WTC11 (cell line): ENCODE measurements at regions of chr1 and their contacts with region 1.

Region 1: DNA sequence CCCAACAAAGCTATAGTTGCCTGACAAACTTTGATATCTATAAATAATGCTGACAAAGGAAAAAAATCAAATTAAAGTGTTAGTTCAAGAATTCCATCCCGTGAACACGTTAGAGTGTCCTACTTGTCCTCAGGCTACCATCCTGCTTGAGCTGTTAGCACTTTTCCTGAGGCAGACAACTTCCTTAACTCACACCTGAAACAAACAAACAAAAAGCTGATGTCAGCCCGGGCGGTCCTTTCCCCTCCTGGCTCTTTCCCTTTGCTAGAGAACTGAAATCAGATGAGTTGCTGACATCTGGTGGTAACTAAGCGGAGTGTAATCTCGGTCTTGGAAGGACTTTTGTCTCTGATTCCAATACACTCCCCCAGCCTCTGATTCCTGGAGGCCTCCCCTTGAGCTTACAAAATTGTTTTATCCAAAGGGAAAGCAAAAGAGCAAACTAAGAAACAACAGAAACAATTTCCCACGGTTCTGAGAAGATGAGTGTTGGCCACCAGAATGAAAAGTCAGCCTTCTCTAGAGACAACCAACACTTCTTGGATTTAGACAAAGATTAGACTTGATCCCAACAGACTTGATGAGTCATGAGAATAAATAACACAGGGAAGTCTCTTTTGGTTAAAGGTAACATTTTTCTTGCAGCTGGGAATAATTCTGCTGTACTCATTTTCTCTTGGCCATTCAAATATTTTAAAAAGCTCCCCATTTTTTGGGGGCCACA is 135.4 kb downstream of the PROX1 start:
- DNase-seq: peak; percentile 71
- ATAC-seq: peak; percentile 97
- H3K4me3 Mint-ChIP-seq: no peak overlapping the region
- H3K27ac Mint-ChIP-seq: no peak overlapping the region
- H3K4me1 Mint-ChIP-seq: peaks cover 26% of the 10 kb centered on the region
- H3K27me3 Mint-ChIP-seq: 0 out of 2 replicates have a peak, but pooled peaks cover 4% of the 10 kb centered on the region
- CTCF ChIP-seq: peak; percentile 16; the same call in 1 of the 2 replicates

Region 2: GRCh38 chr1:213979751-213980586 is 143.3 kb before region 1 on chr1:
- CTCF ChIA-PET with region 1: interaction called, 16 read pairs
- POLR2A ChIA-PET with region 1: no interaction called
- DNase-seq: peak; percentile 63
- ATAC-seq: peak; percentile 67
- H3K4me3 Mint-ChIP-seq: peak overlapping the region; percentile 80
- H3K27ac Mint-ChIP-seq: no peak overlapping the region
- H3K4me1 Mint-ChIP-seq: peaks cover 65% of the 10 kb centered on the region
- H3K27me3 Mint-ChIP-seq: peaks cover 95% of the 10 kb centered on the region
- CTCF ChIP-seq: no peak

Region 3: DNA sequence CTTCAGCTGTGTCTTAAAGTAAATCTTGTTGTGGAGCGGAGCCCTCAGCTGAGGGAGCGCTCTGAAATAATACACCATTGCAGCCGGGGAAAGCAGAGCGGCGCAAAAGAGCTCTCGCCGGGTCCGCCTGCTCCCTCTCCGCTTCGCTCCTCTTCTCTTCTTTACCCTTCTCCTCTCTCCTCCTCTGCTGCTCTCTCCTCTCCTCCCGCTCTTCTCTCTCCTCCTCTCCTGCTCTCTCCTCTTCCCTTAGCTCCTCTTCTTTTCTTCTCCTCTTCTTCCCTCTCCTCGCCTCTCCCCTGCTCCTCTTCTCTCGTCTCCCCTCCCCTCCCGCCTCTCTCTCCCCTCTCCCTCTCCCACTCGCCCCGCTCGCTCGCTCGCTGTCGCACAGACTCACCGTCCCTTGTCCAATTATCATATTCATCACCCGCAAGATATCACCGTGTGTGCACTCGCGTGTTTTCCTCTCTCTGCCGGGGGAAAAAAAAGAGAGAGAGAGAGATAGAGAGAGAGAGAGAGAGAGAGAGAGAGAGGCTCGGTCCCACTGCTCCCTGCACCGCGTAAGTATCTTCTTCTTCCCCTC is 135.2 kb before region 1 on chr1 and contains the start of gene PROX1:
- CTCF ChIA-PET with region 1: interaction called, 22 read pairs
- POLR2A ChIA-PET with region 1: interaction called, 6 read pairs
- DNase-seq: no peak
- ATAC-seq: peak; percentile 53
- H3K4me3 Mint-ChIP-seq: peak within 1 kb of the TSS; percentile 91
- H3K27ac Mint-ChIP-seq: peak within 1 kb of the TSS; percentile 95
- H3K4me1 Mint-ChIP-seq: peaks cover 52% of the 10 kb centered on the region
- H3K27me3 Mint-ChIP-seq: peaks cover 88% of the 10 kb centered on the region
- CTCF ChIP-seq: no peak
- total RNA-seq, gene PROX1: 3.0 to 3.8 TPM (median 3.3 TPM) in 3 replicates

Region 4: GRCh38 chr1:214146523-214146922 is 23.3 kb after region 1 on chr1:
- CTCF ChIA-PET with region 1: no interaction called
- POLR2A ChIA-PET with region 1: no interaction called
- DNase-seq: no peak
- ATAC-seq: no peak
- H3K4me3 Mint-ChIP-seq: no peak overlapping the region
- H3K27ac Mint-ChIP-seq: no peak overlapping the region
- H3K4me1 Mint-ChIP-seq: peaks cover 23% of the 10 kb centered on the region
- H3K27me3 Mint-ChIP-seq: no peaks in the 10 kb centered on the region
- CTCF ChIP-seq: no peak

Region 5: GRCh38 chr1:214187121-214187900 is 64.1 kb after region 1 on chr1:
- CTCF ChIA-PET with region 1: no interaction called
- POLR2A ChIA-PET with region 1: no interaction called
- DNase-seq: peak; percentile 29
- ATAC-seq: peak; percentile 69
- H3K4me3 Mint-ChIP-seq: peak overlapping the region; percentile 64
- H3K27ac Mint-ChIP-seq: no peak overlapping the region
- H3K4me1 Mint-ChIP-seq: peaks cover 13% of the 10 kb centered on the region
- H3K27me3 Mint-ChIP-seq: peaks cover 49% of the 10 kb centered on the region
- CTCF ChIP-seq: no peak

Region 6: GRCh38 chr1:214224611-214225354 is 101.6 kb after region 1 on chr1:
- CTCF ChIA-PET with region 1: no interaction called
- POLR2A ChIA-PET with region 1: no interaction called
- DNase-seq: no peak
- ATAC-seq: peak; percentile 85
- H3K4me3 Mint-ChIP-seq: peak overlapping the region; percentile 63
- H3K27ac Mint-ChIP-seq: no peak overlapping the region
- H3K4me1 Mint-ChIP-seq: peaks cover 27% of the 10 kb centered on the region
- H3K27me3 Mint-ChIP-seq: peaks cover 27% of the 10 kb centered on the region
- CTCF ChIP-seq: no peak

Region 7: GRCh38 chr1:214292322-214292721 is 169.1 kb after region 1 on chr1:
- CTCF ChIA-PET with region 1: no interaction called
- POLR2A ChIA-PET with region 1: no interaction called
- DNase-seq: no peak
- ATAC-seq: no peak
- H3K4me3 Mint-ChIP-seq: no peak overlapping the region
- H3K27ac Mint-ChIP-seq: no peak overlapping the region
- H3K4me1 Mint-ChIP-seq: peaks cover 74% of the 10 kb centered on the region
- H3K27me3 Mint-ChIP-seq: peaks cover 90% of the 10 kb centered on the region
- CTCF ChIP-seq: no peak